Endothelial cell of umbilical vein (primary cell): ENCODE measurements at regions of chr2 and their contacts with region 1.

Region 1: GRCh38 chr2:184611361-184612085 is 13.2 kb downstream of the ZNF804A start:
- DNase-seq: peak; percentile 41
- H3K4me3 ChIP-seq: no peak overlapping the region
- H3K27ac ChIP-seq: no peak overlapping the region
- H3K4me1 ChIP-seq: no peaks in the 10 kb centered on the region
- H3K27me3 ChIP-seq: no peaks in the 10 kb centered on the region
- CTCF ChIP-seq: peak in 1 of 2 donors; percentile 9
- POLR2A ChIP-seq: no peak

Region 2: DNA sequence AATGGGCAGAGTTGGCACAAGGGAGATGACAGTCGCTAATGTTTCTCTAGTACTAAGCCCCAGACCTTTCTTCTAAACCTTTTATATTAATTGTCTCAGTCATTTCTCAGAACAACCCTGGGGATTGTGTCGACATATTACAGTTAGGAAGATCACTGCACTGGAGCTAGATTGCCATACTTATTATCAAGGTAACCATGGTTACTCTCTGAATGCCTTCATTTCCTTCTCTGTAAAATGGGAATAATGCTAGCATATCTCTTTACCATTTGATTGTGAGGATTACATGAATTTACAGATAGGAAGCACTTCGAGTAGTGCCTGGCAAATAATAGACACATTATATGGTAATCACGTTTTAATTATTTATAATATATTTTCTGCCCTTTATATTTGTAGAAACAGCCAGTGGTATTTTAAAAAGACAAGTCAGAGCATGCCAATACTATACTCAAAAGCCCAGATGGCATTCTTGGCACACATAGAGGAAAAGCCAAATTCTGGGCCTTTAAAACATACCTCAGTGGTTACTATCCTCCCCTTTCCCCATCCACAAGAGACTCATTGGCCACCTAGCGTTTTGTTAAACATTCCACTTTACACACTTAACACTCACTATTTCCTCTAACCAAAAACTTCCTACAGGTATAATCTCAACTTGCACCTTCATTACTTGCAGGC is 76.7 kb before region 1 on chr2:
- CTCF ChIA-PET with region 1: no interaction called
- POLR2A ChIA-PET with region 1: no interaction called
- dilution Hi-C with region 1: no loop called
- intact Hi-C with region 1: no loop called
- DNase-seq: no peak
- H3K4me3 ChIP-seq: no peak overlapping the region
- H3K27ac ChIP-seq: no peak overlapping the region
- H3K4me1 ChIP-seq: no peaks in the 10 kb centered on the region
- H3K27me3 ChIP-seq: no peaks in the 10 kb centered on the region
- CTCF ChIP-seq: no peak
- POLR2A ChIP-seq: no peak

Region 3: GRCh38 chr2:184598316-184599053 is 13.0 kb before region 1 on chr2 and contains the start of gene ZNF804A:
- CTCF ChIA-PET with region 1: interaction called, 19 read pairs
- POLR2A ChIA-PET with region 1: no interaction called
- dilution Hi-C with region 1: no loop called
- intact Hi-C with region 1: no loop called
- DNase-seq: peak; percentile 61
- H3K4me3 ChIP-seq: peak within 1 kb of the TSS; percentile 58 to 75 (median 73)
- H3K27ac ChIP-seq: peak within 1 kb of the TSS; percentile 44
- H3K4me1 ChIP-seq: peaks cover 12% of the 10 kb centered on the region
- H3K27me3 ChIP-seq: peaks cover 12 to 34% of the 10 kb centered on the region in 2 experiments
- CTCF ChIP-seq: no peak
- POLR2A ChIP-seq: no peak
- total RNA-seq, gene ZNF804A: 0.90 TPM in 1 of 2 replicates, not detected in the other

Region 4: GRCh38 chr2:184633726-184634125 is 22.2 kb after region 1 on chr2:
- CTCF ChIA-PET with region 1: interaction called, 17 read pairs
- POLR2A ChIA-PET with region 1: no interaction called
- dilution Hi-C with region 1: no loop called
- intact Hi-C with region 1: no loop called
- DNase-seq: no peak
- H3K4me3 ChIP-seq: no peak overlapping the region
- H3K27ac ChIP-seq: no peak overlapping the region
- H3K4me1 ChIP-seq: peaks cover 8% of the 10 kb centered on the region
- H3K27me3 ChIP-seq: no peaks in the 10 kb centered on the region
- CTCF ChIP-seq: no peak
- POLR2A ChIP-seq: no peak

Region 5: GRCh38 chr2:185279999-185280398 is 668.5 kb after region 1 on chr2:
- CTCF ChIA-PET with region 1: interaction called, 14 read pairs
- POLR2A ChIA-PET with region 1: no interaction called
- dilution Hi-C with region 1: no loop called
- intact Hi-C with region 1: loop called (anchors 1 kb)
- DNase-seq: peak; percentile 27
- H3K4me3 ChIP-seq: no peak overlapping the region
- H3K27ac ChIP-seq: no peak overlapping the region
- H3K4me1 ChIP-seq: no peaks in the 10 kb centered on the region
- H3K27me3 ChIP-seq: no peaks in the 10 kb centered on the region
- CTCF ChIP-seq: peak; percentile 26 to 30
- POLR2A ChIP-seq: no peak

Region 6: DNA sequence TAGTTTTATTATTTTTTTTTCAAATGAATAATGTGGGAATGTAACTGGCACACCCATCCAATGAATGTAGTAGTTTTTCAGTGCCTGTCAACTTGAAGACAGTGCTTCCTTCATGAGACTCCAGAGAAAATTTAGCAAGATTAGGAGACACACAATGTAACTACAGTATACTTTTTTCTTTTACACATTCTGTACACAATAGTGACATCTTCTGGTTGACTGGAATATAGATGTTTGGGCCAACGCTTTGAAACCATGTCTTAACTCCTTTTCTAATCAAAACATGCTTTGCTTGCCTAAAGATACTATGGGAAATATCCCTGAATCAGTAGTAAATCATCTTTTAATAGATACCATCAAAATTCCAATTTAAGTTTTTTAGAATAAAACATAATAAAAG is 1645.0 kb after region 1 on chr2:
- CTCF ChIA-PET with region 1: no interaction called
- POLR2A ChIA-PET with region 1: no interaction called
- dilution Hi-C with region 1: no loop called
- intact Hi-C with region 1: loop called (anchors 10 kb)
- DNase-seq: peak; percentile 64
- H3K4me3 ChIP-seq: no peak overlapping the region
- H3K27ac ChIP-seq: no peak overlapping the region
- H3K4me1 ChIP-seq: no peaks in the 10 kb centered on the region
- H3K27me3 ChIP-seq: no peaks in the 10 kb centered on the region
- CTCF ChIP-seq: peak; percentile 35 to 36
- POLR2A ChIP-seq: no peak